AG04449 (cell line): ENCODE measurements at regions of chr5 and their contacts with region 1.

Region 1: DNA sequence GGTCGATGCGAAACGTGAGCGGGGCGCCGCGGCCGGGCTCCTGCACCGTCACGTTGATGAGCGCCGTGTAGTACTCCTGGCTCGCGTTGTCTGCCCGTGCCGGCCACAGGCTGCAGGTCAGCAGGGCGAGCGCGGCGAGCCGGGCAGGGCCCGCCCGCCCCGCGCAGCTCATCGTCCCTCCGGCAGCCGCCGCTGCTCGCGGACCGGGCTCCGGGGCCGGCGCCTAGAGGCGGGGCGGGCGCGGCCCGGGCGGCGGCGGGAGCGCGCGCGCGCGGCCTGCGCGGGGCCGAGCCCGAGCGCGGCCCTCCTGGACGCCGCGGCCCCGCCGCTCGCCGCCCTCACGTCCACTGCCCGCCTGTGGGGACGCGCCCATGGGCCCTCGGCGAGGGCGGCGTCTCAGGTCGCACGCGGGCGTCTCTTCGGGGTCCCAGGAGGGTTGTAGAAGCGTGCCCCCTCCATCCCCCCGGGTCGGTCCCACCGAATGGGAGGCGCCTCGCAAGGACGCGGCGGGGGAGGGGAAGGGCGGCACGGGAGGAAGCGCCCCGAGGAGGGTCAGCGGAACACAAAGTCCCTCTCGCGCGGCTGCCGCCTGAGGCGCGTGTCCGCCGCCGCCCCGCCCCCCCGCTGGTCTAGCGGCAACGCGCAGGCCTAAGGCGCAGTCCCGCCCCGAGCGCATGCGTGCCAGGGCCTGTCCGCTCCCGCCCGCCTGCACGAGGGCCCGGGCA is at the start of gene RNF130:
- DNase-seq: peak; percentile 23
- H3K4me3 ChIP-seq: peak within 1 kb of the TSS; percentile 81
- CTCF ChIP-seq: no peak

Region 2: GRCh38 chr5:180090098-180090768 is 18.5 kb after region 1 on chr5:
- CTCF ChIA-PET with region 1: interaction called, 34 read pairs
- POLR2A ChIA-PET with region 1: no interaction called
- DNase-seq: no peak
- H3K4me3 ChIP-seq: peak overlapping the region; percentile 67
- CTCF ChIP-seq: peak; percentile 82

Region 3: GRCh38 chr5:180105827-180106312 is 34.2 kb after region 1 on chr5:
- CTCF ChIA-PET with region 1: no interaction called
- POLR2A ChIA-PET with region 1: no interaction called
- DNase-seq: no peak
- H3K4me3 ChIP-seq: no peak overlapping the region
- CTCF ChIP-seq: no peak

Region 4: GRCh38 chr5:180253036-180253824 is 181.5 kb after region 1 on chr5:
- CTCF ChIA-PET with region 1: no interaction called
- POLR2A ChIA-PET with region 1: no interaction called
- DNase-seq: no peak
- H3K4me3 ChIP-seq: no peak overlapping the region
- CTCF ChIP-seq: no peak